Heart right ventricle (tissue), 16 donors: ENCODE measurements at regions of chr22 and their contacts with region 1.

Region 1: DNA sequence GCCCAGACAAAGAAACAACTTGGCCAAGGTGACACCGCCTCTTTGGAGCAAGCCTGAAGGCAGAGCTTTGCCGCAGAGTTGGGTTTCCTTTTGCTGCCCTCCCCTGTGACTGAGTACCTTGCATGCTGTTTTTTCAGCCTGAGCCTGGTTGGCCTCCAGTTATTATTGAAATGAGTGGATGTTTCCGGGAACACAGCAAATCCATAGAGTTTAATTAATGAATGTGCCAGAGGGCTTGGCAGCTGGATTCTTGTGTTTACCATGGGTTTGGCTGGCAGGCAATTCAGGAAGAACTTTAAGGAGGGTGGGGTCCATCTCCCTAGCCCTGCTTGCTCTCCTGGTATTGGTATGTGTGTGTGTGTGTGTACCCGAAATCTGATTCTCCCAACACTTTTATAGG is 65.6 kb upstream of the CRYBB3 start:
- DNase-seq: no peak
- ATAC-seq: peak in 7 of 8 donors; percentile 32 to 73 (median 46)
- H3K4me3 ChIP-seq: no peak overlapping the region
- H3K27ac ChIP-seq: peak overlapping the region in 5 of 10 donors; percentile 40 to 58 (median 44)
- H3K4me1 ChIP-seq: peaks cover 3 to 86% (median 31%) of the 10 kb centered on the region in 9 donors
- H3K27me3 ChIP-seq: no peaks in the 10 kb centered on the region
- CTCF ChIP-seq: no peak

Region 2: DNA sequence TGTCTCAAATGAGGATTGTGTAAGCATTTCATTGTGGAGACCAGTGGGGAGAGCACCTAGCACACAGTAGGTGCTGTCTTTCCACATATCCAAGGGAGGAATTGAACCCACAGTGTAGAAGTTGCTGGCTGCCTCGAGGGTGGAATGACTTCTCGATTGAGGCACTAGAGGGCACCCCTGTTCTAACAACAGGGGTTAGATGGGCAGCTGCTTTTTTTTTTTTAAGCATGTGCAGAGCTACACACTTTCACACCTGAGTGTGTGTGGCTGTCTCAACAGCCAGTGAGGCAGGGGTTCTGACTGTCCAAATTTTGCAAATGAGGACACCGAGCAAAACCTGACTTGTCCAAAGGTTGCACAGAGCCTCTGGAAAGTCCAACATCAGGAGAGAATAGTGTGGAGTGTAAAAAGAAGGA is 52.6 kb before region 1 on chr22:
- intact Hi-C with region 1: loop called in 1 of 10 experiments (anchors 5 kb)
- DNase-seq: no peak
- ATAC-seq: peak in 4 of 8 donors; percentile 29 to 44 (median 35)
- H3K4me3 ChIP-seq: no peak overlapping the region
- H3K27ac ChIP-seq: no peak overlapping the region
- H3K4me1 ChIP-seq: peaks cover 0 to 51% (median 15%) of the 10 kb centered on the region in 9 donors
- H3K27me3 ChIP-seq: no peaks in the 10 kb centered on the region
- CTCF ChIP-seq: peak; percentile 18 to 66 (median 57)

Region 3: GRCh38 chr22:25153961-25154666 is 20.1 kb after region 1 on chr22:
- intact Hi-C with region 1: no loop called
- DNase-seq: peak; percentile 41 to 76
- ATAC-seq: peak; percentile 73 to 95 (median 92)
- H3K4me3 ChIP-seq: no peak overlapping the region
- H3K27ac ChIP-seq: peak overlapping the region in 9 of 10 donors; percentile 40 to 86 (median 59)
- H3K4me1 ChIP-seq: peaks cover 12 to 53% (median 30%) of the 10 kb centered on the region in 9 donors
- H3K27me3 ChIP-seq: no peaks in the 10 kb centered on the region
- CTCF ChIP-seq: no peak